ENCODE measurements at regions of chr2 and their contacts with region 1.

Region 1: DNA sequence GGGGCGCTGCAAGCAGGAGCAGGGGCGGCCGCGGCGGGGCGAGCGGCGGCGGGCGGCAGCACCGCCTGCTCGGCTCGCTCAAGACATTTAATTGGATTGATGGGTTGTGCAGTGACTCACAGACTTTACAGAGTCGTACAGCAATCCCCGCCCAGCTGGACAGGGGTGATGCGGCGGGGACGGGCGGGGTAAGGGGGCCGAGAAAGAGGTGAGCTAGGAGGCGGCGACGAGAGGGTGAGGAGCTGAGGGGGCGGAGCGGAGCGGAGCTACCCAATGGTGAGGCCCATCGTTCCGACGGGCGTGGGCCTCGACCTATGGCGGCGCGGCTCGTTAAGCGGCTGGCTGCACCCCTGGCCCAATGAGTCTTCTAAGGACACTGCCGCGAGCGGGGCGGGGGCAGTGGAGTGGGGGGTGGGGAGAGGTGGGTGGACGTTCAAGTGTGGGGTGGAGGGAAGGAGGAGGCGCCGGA is 97.1 kb upstream of the SERTAD2 start:
- DNase-seq: peak; percentile 96 to 99 (median 97)
- H3K4me3 ChIP-seq: peak overlapping the region; percentile 84 to 98
- H3K4me3 Mint-ChIP-seq: peak overlapping the region; percentile 98 to 99 (median 99)
- H3K27ac ChIP-seq: peak overlapping the region; percentile 93
- H3K27ac Mint-ChIP-seq: peak overlapping the region; percentile 91 to 98 (median 96)
- H3K4me1 ChIP-seq: peaks cover 20% of the 10 kb centered on the region
- H3K4me1 Mint-ChIP-seq: peaks cover 13 to 30% (median 23%) of the 10 kb centered on the region in 4 donors
- H3K27me3 ChIP-seq: no peaks in the 10 kb centered on the region
- H3K27me3 Mint-ChIP-seq: no peaks in the 10 kb centered on the region

Region 2: DNA sequence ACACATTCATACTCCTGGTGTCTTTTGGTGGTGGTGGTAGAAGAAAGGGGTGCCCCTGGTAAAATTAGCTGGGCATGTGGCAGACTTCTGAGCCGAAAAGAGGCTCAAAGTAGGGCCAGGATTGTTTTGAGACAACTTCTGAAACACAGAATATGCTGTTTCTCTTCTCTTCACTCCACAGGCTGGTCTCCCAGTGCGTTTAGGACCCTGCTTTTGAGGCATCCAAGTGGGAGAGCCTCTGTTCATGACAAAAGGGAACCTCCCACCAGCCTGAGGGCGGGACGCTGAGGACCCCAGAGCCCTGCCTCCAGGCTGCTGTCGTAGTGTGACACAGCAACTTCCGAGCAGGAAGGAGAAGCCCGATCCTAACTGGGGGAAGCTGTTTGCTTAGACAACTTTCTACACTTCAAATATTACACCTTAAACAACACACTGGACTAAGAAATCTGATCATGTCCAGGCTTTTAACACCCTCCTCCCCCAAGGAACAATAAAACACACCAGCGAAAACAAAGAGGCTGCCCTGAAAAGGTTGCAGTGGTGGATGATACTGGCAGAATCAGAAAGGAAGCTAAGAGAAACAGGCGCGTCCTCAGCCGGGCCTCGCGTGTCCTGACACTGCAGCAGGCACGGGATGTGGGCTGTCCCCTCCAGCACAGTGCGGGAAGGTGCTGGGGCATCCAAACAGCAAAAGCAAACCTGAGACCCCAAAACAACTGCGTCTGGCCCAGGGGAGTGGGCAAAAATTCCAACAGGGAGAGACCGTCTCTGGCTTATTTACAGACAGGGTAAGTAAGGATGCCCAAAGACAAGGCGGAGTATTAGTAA is 106.5 kb before region 1 on chr2:
- CTCF ChIA-PET with region 1: interaction called, 101 read pairs
- POLR2A ChIA-PET with region 1: interaction called, 298 read pairs
- intact Hi-C with region 1: loop called (anchors 1 kb)
- DNase-seq: peak in 2 of 5 donors; percentile 35 to 38
- H3K4me3 ChIP-seq: no peak overlapping the region
- H3K4me3 Mint-ChIP-seq: peak overlapping the region; percentile 82 to 92 (median 86)
- H3K27ac ChIP-seq: no peak overlapping the region
- H3K27ac Mint-ChIP-seq: peak overlapping the region; percentile 7 to 87 (median 83)
- H3K4me1 ChIP-seq: peaks cover 52% of the 10 kb centered on the region
- H3K4me1 Mint-ChIP-seq: peaks cover 28 to 70% (median 43%) of the 10 kb centered on the region in 4 donors
- H3K27me3 ChIP-seq: no peaks in the 10 kb centered on the region
- H3K27me3 Mint-ChIP-seq: no peaks in the 10 kb centered on the region

Region 3: GRCh38 chr2:64666810-64667438 is 83.9 kb before region 1 on chr2:
- CTCF ChIA-PET with region 1: interaction called, 9 read pairs
- POLR2A ChIA-PET with region 1: interaction called, 46 read pairs
- intact Hi-C with region 1: no loop called
- DNase-seq: peak in 3 of 5 donors; percentile 12 to 25 (median 18)
- H3K4me3 ChIP-seq: no peak overlapping the region
- H3K4me3 Mint-ChIP-seq: peak overlapping the region; percentile 1 to 68 (median 35)
- H3K27ac ChIP-seq: no peak overlapping the region
- H3K27ac Mint-ChIP-seq: peak overlapping the region; percentile 61 to 94 (median 67)
- H3K4me1 ChIP-seq: peaks cover 34% of the 10 kb centered on the region
- H3K4me1 Mint-ChIP-seq: peaks cover 15 to 34% (median 25%) of the 10 kb centered on the region in 4 donors
- H3K27me3 ChIP-seq: no peaks in the 10 kb centered on the region
- H3K27me3 Mint-ChIP-seq: no peaks in the 10 kb centered on the region

Region 4: DNA sequence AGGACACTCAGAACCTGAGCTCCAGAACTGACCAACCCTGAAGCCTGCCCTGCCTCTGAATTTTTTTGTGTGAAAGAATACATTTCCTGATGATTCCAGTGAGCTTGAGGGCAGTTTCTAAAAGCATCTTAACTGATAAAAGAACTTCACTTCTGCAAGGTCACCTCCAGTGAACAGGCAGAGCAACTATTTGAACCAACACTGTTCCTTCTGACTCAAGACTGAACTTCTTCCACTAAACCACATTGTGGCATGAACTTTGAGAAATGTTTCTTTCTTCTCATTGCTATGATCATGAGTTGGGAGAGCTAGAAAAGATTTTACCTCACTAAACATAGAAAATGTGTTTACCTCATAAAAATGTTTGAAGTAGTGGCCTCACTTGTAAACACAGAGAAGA is 13.3 kb before region 1 on chr2:
- CTCF ChIA-PET with region 1: interaction called, 12 read pairs
- POLR2A ChIA-PET with region 1: interaction called, 172 read pairs
- intact Hi-C with region 1: no loop called
- DNase-seq: no peak
- H3K4me3 ChIP-seq: no peak overlapping the region
- H3K4me3 Mint-ChIP-seq: no peak overlapping the region
- H3K27ac ChIP-seq: no peak overlapping the region
- H3K27ac Mint-ChIP-seq: peak overlapping the region in 1 of 7 donors; percentile 22
- H3K4me1 ChIP-seq: peaks cover 3% of the 10 kb centered on the region
- H3K4me1 Mint-ChIP-seq: peaks cover 0 to 8% (median 2%) of the 10 kb centered on the region in 4 donors
- H3K27me3 ChIP-seq: no peaks in the 10 kb centered on the region
- H3K27me3 Mint-ChIP-seq: no peaks in the 10 kb centered on the region

Region 5: GRCh38 chr2:64831134-64831976 is 80.5 kb after region 1 on chr2:
- CTCF ChIA-PET with region 1: interaction called, 30 read pairs
- POLR2A ChIA-PET with region 1: interaction called, 26 read pairs
- intact Hi-C with region 1: loop called (anchors 1 kb)
- DNase-seq: peak; percentile 74 to 90 (median 75)
- H3K4me3 ChIP-seq: peak overlapping the region; percentile 22 to 48
- H3K4me3 Mint-ChIP-seq: peak overlapping the region; percentile 19 to 78 (median 66)
- H3K27ac ChIP-seq: no peak overlapping the region
- H3K27ac Mint-ChIP-seq: peak overlapping the region in 5 of 7 donors; percentile 31 to 72 (median 45)
- H3K4me1 ChIP-seq: peaks cover 10% of the 10 kb centered on the region
- H3K4me1 Mint-ChIP-seq: peaks cover 2 to 12% (median 8%) of the 10 kb centered on the region in 4 donors
- H3K27me3 ChIP-seq: no peaks in the 10 kb centered on the region
- H3K27me3 Mint-ChIP-seq: peaks cover 2 to 3% of the 10 kb centered on the region in 2 donors